H1 (cell line): ENCODE measurements at regions of chr4 and their contacts with region 1.

Region 1: GRCh38 chr4:153649572-153649991 is 34.5 kb upstream of the TLR2 start:
- DNase-seq: no peak
- H3K4me3 ChIP-seq: no peak overlapping the region
- H3K27ac ChIP-seq: no peak overlapping the region
- H3K4me1 ChIP-seq: peaks cover 0 to 10% (median 1%) of the 10 kb centered on the region in 4 experiments; a peak in 2 of 7 replicates
- H3K27me3 ChIP-seq: no peaks in the 10 kb centered on the region
- CTCF ChIP-seq: peak; percentile 30 to 62 (median 57)
- EP300 ChIP-seq: no peak
- POLR2A ChIP-seq: no peak
- RAD21 ChIP-seq: peak; percentile 73 to 78

Region 2: GRCh38 chr4:153344131-153345010 is 305.2 kb before region 1 on chr4 and contains the start of gene MND1:
- CTCF ChIA-PET with region 1: interaction called, 13 read pairs
- POLR2A ChIA-PET with region 1: no interaction called
- DNase-seq: peak; percentile 72 to 96
- H3K4me3 ChIP-seq: peak within 1 kb of the TSS; percentile 53 to 80 (median 74)
- H3K27ac ChIP-seq: peak within 1 kb of the TSS; percentile 88
- H3K4me1 ChIP-seq: peaks cover 0 to 3% (median 2%) of the 10 kb centered on the region in 4 experiments; a peak in 3 of 7 replicates
- H3K27me3 ChIP-seq: no peaks in the 10 kb centered on the region
- CTCF ChIP-seq: peak; percentile 70 to 82 (median 76)
- EP300 ChIP-seq: peak in 1 of 2 experiments; percentile 48; a peak in 1 of 3 replicates
- POLR2A ChIP-seq: peak; percentile 92 to 93
- RAD21 ChIP-seq: peak; percentile 79 to 83
- total RNA-seq, gene MND1: 26.2 and 27.4 TPM in 2 replicates

Region 3: GRCh38 chr4:153497988-153498967 is 151.3 kb before region 1 on chr4:
- CTCF ChIA-PET with region 1: no interaction called
- POLR2A ChIA-PET with region 1: no interaction called
- DNase-seq: peak in 1 of 2 experiments; percentile 41
- H3K4me3 ChIP-seq: no peak overlapping the region
- H3K27ac ChIP-seq: no peak overlapping the region
- H3K4me1 ChIP-seq: peaks cover 1 to 13% (median 9%) of the 10 kb centered on the region in 4 experiments; a peak in 5 of 7 replicates
- H3K27me3 ChIP-seq: no peaks in the 10 kb centered on the region
- CTCF ChIP-seq: no peak
- EP300 ChIP-seq: no peak
- POLR2A ChIP-seq: no peak
- RAD21 ChIP-seq: no peak

Region 4: GRCh38 chr4:153634738-153635353 is 14.7 kb before region 1 on chr4:
- CTCF ChIA-PET with region 1: interaction called, 142 read pairs
- POLR2A ChIA-PET with region 1: no interaction called
- DNase-seq: no peak
- H3K4me3 ChIP-seq: no peak overlapping the region
- H3K27ac ChIP-seq: no peak overlapping the region
- H3K4me1 ChIP-seq: peaks cover 0 to under 1% (median 0%) of the 10 kb centered on the region in 4 experiments; a peak in 1 of 7 replicates
- H3K27me3 ChIP-seq: no peaks in the 10 kb centered on the region
- CTCF ChIP-seq: peak in 2 of 3 experiments; percentile 55 to 78; a peak in 3 of 4 replicates
- EP300 ChIP-seq: no peak
- POLR2A ChIP-seq: no peak
- RAD21 ChIP-seq: peak; percentile 63 to 64

Region 5: GRCh38 chr4:153684182-153684970 is 34.8 kb after region 1 on chr4 and contains the start of gene TLR2:
- CTCF ChIA-PET with region 1: interaction called, 10 read pairs
- POLR2A ChIA-PET with region 1: no interaction called
- DNase-seq: peak in 1 of 2 experiments; percentile 84
- H3K4me3 ChIP-seq: peak within 1 kb of the TSS; percentile 45 to 64 (median 56)
- H3K27ac ChIP-seq: no peak within 1 kb of the TSS
- H3K4me1 ChIP-seq: peaks cover 0 to 4% (median 1%) of the 10 kb centered on the region in 4 experiments; a peak in 5 of 7 replicates
- H3K27me3 ChIP-seq: peaks cover 12 to 44% (median 34%) of the 10 kb centered on the region in 4 experiments
- CTCF ChIP-seq: no peak
- EP300 ChIP-seq: no peak
- POLR2A ChIP-seq: no peak
- RAD21 ChIP-seq: no peak
- total RNA-seq, gene TLR2: 1.3 and 1.5 TPM in 2 replicates

Region 6: GRCh38 chr4:153741541-153741940 is 92.0 kb after region 1 on chr4:
- CTCF ChIA-PET with region 1: interaction called, 15 read pairs
- POLR2A ChIA-PET with region 1: no interaction called
- DNase-seq: no peak
- H3K4me3 ChIP-seq: no peak overlapping the region
- H3K27ac ChIP-seq: no peak overlapping the region
- H3K4me1 ChIP-seq: no peaks in the 10 kb centered on the region
- H3K27me3 ChIP-seq: no peaks in the 10 kb centered on the region
- CTCF ChIP-seq: no peak
- EP300 ChIP-seq: no peak
- POLR2A ChIP-seq: no peak
- RAD21 ChIP-seq: no peak

Region 7: DNA sequence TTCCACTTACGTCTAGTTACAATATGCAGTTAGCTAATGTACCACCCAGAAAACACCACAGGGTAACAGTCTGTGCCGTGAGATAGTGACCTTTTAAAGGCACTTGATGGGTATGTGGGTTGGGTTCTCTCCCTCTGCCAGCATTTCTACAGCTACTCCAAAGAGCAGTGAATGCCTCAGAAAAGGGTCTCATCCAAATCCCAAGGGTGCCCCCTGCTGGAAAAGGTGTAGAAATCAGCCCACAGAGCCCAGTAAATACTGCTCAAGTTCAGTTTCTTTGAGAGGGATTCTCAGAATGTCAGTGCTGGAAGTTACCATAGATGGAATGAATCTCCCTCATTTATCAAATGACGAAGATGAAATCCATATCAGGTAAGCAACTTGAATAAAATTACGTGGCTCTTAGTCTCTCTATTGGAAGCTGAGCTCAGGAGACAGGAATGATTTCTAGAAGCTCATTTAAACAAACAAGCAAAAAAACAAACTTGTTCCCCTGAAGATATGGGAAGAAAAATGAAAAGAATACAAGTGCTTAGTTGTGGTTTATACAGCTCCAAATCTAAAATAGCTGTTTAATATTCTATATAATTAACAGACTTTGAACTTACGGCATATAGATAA is 100.7 kb after region 1 on chr4:
- CTCF ChIA-PET with region 1: interaction called, 37 read pairs
- POLR2A ChIA-PET with region 1: no interaction called
- DNase-seq: peak in 1 of 2 experiments; percentile 80
- H3K4me3 ChIP-seq: no peak overlapping the region
- H3K27ac ChIP-seq: no peak overlapping the region
- H3K4me1 ChIP-seq: no peaks in the 10 kb centered on the region
- H3K27me3 ChIP-seq: no peaks in the 10 kb centered on the region
- CTCF ChIP-seq: peak in 2 of 3 experiments; percentile 81 to 83; a peak in 3 of 4 replicates
- EP300 ChIP-seq: no peak
- POLR2A ChIP-seq: no peak
- RAD21 ChIP-seq: peak; percentile 85 to 94